ENCODE measurements at regions of chr2 and their contacts with region 1.

Region 1: GRCh38 chr2:213251618-213252017 is 32.6 kb upstream of the SPAG16 start:
- DNase-seq: peak; percentile 66
- H3K4me3 Mint-ChIP-seq: no peak overlapping the region
- H3K27ac Mint-ChIP-seq: no peak overlapping the region
- H3K4me1 Mint-ChIP-seq: peaks cover 6% of the 10 kb centered on the region
- H3K27me3 Mint-ChIP-seq: no peaks in the 10 kb centered on the region
- CTCF ChIP-seq: peak; percentile 71

Region 2: DNA sequence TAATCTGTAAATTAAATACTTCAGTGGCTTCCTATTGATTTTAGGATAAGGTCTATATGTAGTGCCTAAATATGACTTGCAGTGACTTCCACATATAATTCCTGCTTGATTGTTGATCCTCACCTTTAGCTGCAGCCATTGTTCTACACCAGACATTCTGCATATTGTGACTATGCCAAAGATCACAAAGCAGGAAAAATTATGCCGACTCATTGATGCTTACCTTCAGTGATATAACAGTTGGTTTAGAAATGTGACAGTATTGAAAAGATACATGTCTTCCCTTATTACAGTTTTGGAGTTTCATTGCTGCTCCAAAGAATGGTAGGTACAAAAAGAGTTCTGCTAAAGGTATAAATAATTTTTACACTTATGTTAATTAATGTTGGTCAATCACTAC is 20.3 kb after region 1 on chr2:
- CTCF ChIA-PET with region 1: no interaction called
- POLR2A ChIA-PET with region 1: no interaction called
- intact Hi-C with region 1: no loop called
- DNase-seq: no peak
- H3K4me3 Mint-ChIP-seq: no peak overlapping the region
- H3K27ac Mint-ChIP-seq: no peak overlapping the region
- H3K4me1 Mint-ChIP-seq: no peaks in the 10 kb centered on the region
- H3K27me3 Mint-ChIP-seq: no peaks in the 10 kb centered on the region
- CTCF ChIP-seq: no peak

Region 3: GRCh38 chr2:213806125-213806726 is 554.6 kb after region 1 on chr2:
- CTCF ChIA-PET with region 1: interaction called, 3 read pairs
- POLR2A ChIA-PET with region 1: no interaction called
- intact Hi-C with region 1: loop called (anchors 1 kb)
- DNase-seq: peak; percentile 46
- H3K4me3 Mint-ChIP-seq: no peak overlapping the region
- H3K27ac Mint-ChIP-seq: no peak overlapping the region
- H3K4me1 Mint-ChIP-seq: no peaks in the 10 kb centered on the region
- H3K27me3 Mint-ChIP-seq: no peaks in the 10 kb centered on the region
- CTCF ChIP-seq: peak; percentile 38

Region 4: DNA sequence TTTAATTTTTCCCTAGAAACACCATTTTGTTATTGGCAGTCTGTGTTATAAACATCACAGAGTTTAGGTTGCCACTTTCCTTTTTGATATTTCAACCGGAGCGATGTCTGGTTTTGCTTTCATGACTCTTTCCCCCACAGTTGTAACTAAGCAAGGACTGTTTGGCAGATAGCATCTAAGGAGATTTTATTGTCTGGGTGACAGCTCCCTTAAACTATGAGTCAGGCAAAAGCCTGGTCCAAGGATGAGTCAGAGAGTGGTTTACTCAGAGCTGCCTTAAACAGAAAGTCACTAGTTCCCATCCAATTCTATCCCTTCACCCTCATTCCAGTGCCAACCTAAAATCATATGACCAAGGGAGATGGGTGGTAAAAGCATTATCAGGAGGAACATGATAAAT is 817.6 kb after region 1 on chr2:
- CTCF ChIA-PET with region 1: no interaction called
- POLR2A ChIA-PET with region 1: no interaction called
- intact Hi-C with region 1: loop called (anchors 10 kb)
- DNase-seq: peak; percentile 91
- H3K4me3 Mint-ChIP-seq: no peak overlapping the region
- H3K27ac Mint-ChIP-seq: no peak overlapping the region
- H3K4me1 Mint-ChIP-seq: no peaks in the 10 kb centered on the region
- H3K27me3 Mint-ChIP-seq: no peaks in the 10 kb centered on the region
- CTCF ChIP-seq: no peak

Region 5: DNA sequence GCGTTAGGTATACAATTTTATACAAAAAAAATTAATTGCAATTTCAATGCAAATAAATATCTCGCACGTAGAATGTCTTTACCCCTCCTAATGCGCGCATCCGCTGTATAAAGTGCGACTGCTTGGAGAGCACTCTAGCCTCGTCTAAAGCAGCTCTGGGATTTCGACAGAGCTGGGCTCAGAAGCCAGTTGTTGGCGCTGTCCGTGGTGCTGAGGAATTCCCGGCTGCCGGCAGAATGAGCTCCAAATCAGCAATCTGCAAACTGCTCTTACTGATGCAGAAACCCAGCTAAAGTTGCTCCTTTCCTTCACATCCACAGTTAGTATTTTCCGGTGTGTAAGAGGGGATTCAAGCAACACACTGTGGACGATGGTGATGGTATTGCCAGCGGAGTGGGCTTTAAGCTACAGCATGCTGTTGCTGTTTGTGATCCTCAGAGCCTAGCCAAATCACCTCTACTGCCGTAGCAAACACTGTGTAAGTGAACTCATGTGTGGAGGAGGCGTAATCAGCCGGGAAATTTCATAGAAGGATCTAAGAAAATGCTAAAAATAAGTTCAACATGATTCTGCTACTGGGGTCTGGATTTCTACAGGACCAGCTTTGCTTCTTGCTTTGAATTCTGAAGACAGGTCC is 1159.4 kb after region 1 on chr2 and contains the start of gene VWC2L:
- CTCF ChIA-PET with region 1: no interaction called
- POLR2A ChIA-PET with region 1: no interaction called
- intact Hi-C with region 1: loop called (anchors 5 kb)
- DNase-seq: peak; percentile 83
- H3K4me3 Mint-ChIP-seq: no peak within 1 kb of the TSS
- H3K27ac Mint-ChIP-seq: no peak within 1 kb of the TSS
- H3K4me1 Mint-ChIP-seq: peaks cover 5% of the 10 kb centered on the region
- H3K27me3 Mint-ChIP-seq: no peaks in the 10 kb centered on the region
- CTCF ChIP-seq: no peak
- total RNA-seq, gene VWC2L: not detected in 2 replicates

Region 6: GRCh38 chr2:214809751-214810564 is 1558.3 kb after region 1 on chr2:
- CTCF ChIA-PET with region 1: no interaction called
- POLR2A ChIA-PET with region 1: no interaction called
- intact Hi-C with region 1: loop called (anchors 5 kb)
- DNase-seq: peak; percentile 97
- H3K4me3 Mint-ChIP-seq: peak overlapping the region; percentile 98
- H3K27ac Mint-ChIP-seq: peak overlapping the region; percentile 94
- H3K4me1 Mint-ChIP-seq: peaks cover 17% of the 10 kb centered on the region
- H3K27me3 Mint-ChIP-seq: no peaks in the 10 kb centered on the region
- CTCF ChIP-seq: no peak

Measured in MCF 10A (cell line).